Activated naive CD8-positive, alpha-beta T cell treated with anti-CD3 and anti-CD28 coated beads, Interleukin-2, amount 10 ng/mL, durations not matched to agents 7 days and 5 days (primary cell): ENCODE measurements at regions of chr10 and their contacts with region 1.

Region 1: GRCh38 chr10:128116851-128117615 is 9.2 kb downstream of the MKI67 start:
- DNase-seq: no peak
- ATAC-seq: no peak
- H3K4me3 Mint-ChIP-seq: no peak overlapping the region
- H3K27ac Mint-ChIP-seq: no peak overlapping the region
- H3K4me1 Mint-ChIP-seq: peaks cover 31% of the 10 kb centered on the region
- H3K27me3 Mint-ChIP-seq: no peaks in the 10 kb centered on the region

Region 2: GRCh38 chr10:128105383-128105782 is 11.7 kb before region 1 on chr10:
- POLR2A ChIA-PET with region 1: interaction called, 11 read pairs
- DNase-seq: no peak
- ATAC-seq: no peak
- H3K4me3 Mint-ChIP-seq: no peak overlapping the region
- H3K27ac Mint-ChIP-seq: no peak overlapping the region
- H3K4me1 Mint-ChIP-seq: peaks cover 30% of the 10 kb centered on the region
- H3K27me3 Mint-ChIP-seq: no peaks in the 10 kb centered on the region

Region 3: DNA sequence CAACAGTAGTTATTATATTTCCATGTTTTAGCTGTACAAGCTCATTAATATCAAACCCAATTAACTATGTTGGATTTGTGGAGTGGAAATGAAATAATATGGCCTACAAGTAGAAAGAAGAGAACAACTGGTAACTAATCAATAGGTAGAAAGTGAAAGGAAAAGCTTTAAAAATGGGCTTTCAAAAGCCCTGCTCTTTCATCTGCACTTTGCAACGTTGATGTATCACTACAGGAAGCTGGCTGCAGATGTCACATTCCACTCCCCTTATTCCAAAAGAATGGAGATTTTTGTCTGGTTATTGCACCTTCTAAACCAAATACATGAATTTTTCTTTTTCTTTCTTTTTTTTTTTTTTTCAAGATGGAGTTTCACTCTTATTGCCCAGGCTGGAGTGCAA is 20.8 kb after region 1 on chr10:
- POLR2A ChIA-PET with region 1: no interaction called
- DNase-seq: no peak
- ATAC-seq: peak; percentile 66
- H3K4me3 Mint-ChIP-seq: no peak overlapping the region
- H3K27ac Mint-ChIP-seq: no peak overlapping the region
- H3K4me1 Mint-ChIP-seq: peaks cover 4% of the 10 kb centered on the region
- H3K27me3 Mint-ChIP-seq: peaks cover 11% of the 10 kb centered on the region